ENCODE measurements at regions of chr19 and their contacts with region 1.

Region 1: DNA sequence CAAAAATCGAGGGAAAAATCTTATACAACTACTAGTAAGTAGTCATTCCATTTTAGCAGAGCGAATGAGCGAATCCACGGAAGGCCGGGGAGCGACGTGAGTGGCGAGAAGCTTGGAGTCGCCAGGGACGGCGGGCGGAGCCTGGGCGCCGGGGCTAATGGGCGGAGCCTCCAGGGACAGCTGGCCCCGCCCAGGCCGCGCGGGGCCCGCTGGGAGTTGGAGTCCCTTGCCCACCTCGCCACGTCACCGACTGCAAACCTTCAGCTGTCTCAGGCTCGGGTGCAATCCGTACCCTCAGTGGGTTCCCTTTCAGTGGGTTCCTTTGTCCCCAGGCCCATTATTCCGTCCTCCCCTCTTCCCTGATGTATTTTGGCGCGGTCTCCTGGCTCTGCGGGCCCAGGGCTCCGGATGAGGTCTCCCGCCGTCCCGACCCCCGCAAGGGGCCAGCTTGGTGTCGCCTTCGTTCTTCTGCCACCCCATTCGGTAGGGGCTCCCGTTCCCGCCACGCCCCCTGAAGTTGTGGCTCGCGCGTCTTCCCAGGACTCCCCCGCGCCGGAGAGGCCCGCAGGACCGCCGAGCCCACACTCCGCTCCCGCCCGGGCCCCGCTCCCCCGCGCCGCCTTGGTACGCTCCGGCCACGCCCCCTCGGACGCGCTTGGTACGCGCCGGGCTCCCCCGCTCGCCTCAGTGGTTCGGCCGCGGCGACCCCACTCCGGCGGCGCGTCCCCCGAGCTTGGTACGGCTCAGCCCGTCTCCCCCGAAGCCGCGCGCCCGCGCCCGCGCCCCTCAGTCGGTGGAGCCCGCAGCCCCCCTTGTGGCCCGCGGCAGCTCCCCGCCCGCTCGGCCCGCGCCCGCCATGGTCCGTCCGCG is at the start of gene PTOV1:
- DNase-seq: peak; percentile 93
- H3K4me3 Mint-ChIP-seq: peak within 1 kb of the TSS; percentile 84
- H3K27ac Mint-ChIP-seq: peak within 1 kb of the TSS; percentile 89
- H3K4me1 Mint-ChIP-seq: peaks cover 32% of the 10 kb centered on the region
- H3K27me3 Mint-ChIP-seq: no peaks in the 10 kb centered on the region
- CTCF ChIP-seq: no peak
- total RNA-seq, gene PTOV1: 68.5 and 78.8 TPM in 2 replicates

Region 2: GRCh38 chr19:49817964-49818648 is 32.6 kb before region 1 on chr19 and contains the start of gene MED25:
- CTCF ChIA-PET with region 1: interaction called, 3 read pairs
- POLR2A ChIA-PET with region 1: interaction called, 30 read pairs
- intact Hi-C with region 1: loop called (anchors 1 kb)
- DNase-seq: peak; percentile 84
- H3K4me3 Mint-ChIP-seq: peak within 1 kb of the TSS; percentile 97
- H3K27ac Mint-ChIP-seq: peak within 1 kb of the TSS; percentile 100
- H3K4me1 Mint-ChIP-seq: peaks cover 16% of the 10 kb centered on the region
- H3K27me3 Mint-ChIP-seq: no peaks in the 10 kb centered on the region
- CTCF ChIP-seq: peak; percentile 26
- total RNA-seq, gene MED25: 39.9 and 43.2 TPM in 2 replicates

Region 3: DNA sequence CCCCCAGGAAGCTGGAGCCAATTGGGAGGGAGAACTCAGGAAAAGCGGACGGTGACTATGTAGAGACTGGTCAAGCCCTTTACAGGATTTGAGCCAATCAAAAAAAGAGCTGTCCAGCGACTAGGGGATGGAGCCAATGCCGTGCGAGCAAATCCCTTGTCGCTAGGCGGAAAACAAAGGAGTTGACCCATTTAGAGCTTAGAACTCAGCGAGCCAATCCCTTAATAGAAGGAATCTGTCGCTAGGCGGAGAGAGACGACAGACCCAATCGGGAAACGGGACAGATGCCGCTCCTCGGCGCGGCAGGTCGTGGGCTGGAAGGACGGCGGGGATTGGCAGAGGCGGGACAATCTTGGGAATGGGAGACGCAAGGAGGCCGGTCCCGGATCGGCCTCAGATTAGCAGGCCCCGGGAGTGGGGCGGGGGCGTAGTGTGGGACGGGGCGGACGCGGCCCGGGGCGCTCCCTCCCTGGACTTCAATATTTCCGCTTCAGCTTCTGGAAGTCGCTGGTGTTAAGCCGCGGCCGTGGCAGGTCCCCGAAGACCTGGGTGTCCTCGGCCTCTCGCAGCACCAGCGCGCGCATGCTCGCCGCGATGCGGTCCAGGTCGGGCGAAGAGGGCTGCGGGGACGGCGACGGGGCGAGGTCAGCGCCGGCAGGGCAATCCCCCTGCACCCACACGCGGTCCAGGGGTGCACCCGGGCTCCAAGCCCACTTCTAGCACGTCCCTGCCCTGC is 18.9 kb after region 1 on chr19:
- CTCF ChIA-PET with region 1: no interaction called
- POLR2A ChIA-PET with region 1: interaction called, 40 read pairs
- intact Hi-C with region 1: no loop called
- DNase-seq: peak; percentile 100
- H3K4me3 Mint-ChIP-seq: no peak overlapping the region
- H3K27ac Mint-ChIP-seq: no peak overlapping the region
- H3K4me1 Mint-ChIP-seq: peaks cover 5% of the 10 kb centered on the region
- H3K27me3 Mint-ChIP-seq: no peaks in the 10 kb centered on the region
- CTCF ChIP-seq: no peak

Region 4: GRCh38 chr19:49877020-49877878 is 26.5 kb after region 1 on chr19 and contains the starts of genes AKT1S1 and TBC1D17:
- CTCF ChIA-PET with region 1: no interaction called
- POLR2A ChIA-PET with region 1: interaction called, 20 read pairs
- intact Hi-C with region 1: no loop called
- DNase-seq: peak; percentile 100
- H3K4me3 Mint-ChIP-seq: no peak within 1 kb of the TSS
- H3K27ac Mint-ChIP-seq: no peak within 1 kb of the TSS
- H3K4me1 Mint-ChIP-seq: peaks cover 10% of the 10 kb centered on the region
- H3K27me3 Mint-ChIP-seq: no peaks in the 10 kb centered on the region
- CTCF ChIP-seq: no peak
- total RNA-seq, gene AKT1S1: 74.7 and 79.2 TPM in 2 replicates
- total RNA-seq, gene TBC1D17: 25.2 and 25.5 TPM in 2 replicates